ENCODE measurements at regions of chr11 and their contacts with region 1.

Region 1: GRCh38 chr11:126303623-126304456 is at the start of gene DCPS:
- DNase-seq: peak; percentile 84 to 99 (median 92)

Region 2: DNA sequence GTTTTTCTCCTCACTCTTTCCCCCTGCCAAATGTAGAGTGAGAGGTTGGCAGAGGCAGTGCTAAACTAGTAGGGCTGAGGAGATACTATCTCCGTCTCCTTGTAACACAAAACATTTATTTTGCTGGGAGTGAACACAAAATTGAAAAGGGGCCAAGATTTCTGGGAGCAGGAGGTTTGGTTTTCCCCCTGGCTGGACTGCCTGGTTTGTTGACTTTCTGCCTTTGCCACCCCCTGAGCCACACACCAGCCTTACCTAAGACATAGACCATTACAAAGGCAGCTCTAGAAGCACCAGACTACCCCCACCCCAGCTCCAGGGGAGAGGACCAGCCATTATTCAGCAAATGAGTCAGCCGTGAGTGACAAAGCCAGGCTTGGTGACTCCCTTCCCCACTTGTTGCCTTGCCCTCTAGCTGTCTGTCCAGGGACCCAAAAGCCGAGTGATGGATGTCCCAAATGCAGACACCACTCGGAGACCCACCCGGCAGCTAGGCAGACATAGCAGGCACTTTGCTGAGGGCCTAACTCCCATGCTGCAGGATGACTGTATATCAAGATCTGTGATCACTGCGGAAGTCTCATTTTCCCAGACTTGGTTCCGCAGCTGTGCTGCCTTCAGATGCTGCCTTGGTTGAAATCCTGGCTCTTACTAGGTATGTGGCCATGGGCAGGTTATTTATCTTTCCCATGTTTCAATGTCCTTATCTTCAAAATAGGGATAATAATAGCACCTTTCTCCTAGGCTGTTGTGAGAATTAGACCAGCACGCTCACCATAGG is 223.5 kb before region 1 on chr11:
- intact Hi-C with region 1: no loop called
- DNase-seq: no peak

Region 3: GRCh38 chr11:126345759-126346585 is 42.1 kb after region 1 on chr11:
- intact Hi-C with region 1: no loop called
- DNase-seq: peak in 3 of 10 donors; percentile 38 to 88 (median 77)

Region 4: DNA sequence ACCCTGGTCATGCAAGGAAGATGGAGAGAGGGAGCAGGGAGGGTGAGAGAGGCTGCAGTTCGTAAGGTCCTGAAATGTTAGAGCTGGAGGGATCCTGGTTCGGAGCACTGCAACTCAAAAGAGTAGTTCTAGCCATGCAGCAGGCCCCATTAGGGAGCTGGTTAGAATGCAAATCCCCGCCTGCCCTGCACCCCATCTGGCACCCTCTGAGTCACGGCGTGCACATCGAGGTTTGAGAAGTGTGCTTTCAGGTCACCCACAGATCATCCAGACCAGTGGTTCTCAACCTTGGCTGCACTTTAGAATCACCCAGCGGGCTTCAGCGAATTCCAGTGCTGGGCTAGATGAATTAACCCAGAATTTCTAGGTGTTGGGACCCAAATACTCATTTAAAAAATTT is 99.8 kb after region 1 on chr11:
- intact Hi-C with region 1: no loop called
- DNase-seq: peak in 2 of 10 donors; percentile 7 to 74

Region 5: DNA sequence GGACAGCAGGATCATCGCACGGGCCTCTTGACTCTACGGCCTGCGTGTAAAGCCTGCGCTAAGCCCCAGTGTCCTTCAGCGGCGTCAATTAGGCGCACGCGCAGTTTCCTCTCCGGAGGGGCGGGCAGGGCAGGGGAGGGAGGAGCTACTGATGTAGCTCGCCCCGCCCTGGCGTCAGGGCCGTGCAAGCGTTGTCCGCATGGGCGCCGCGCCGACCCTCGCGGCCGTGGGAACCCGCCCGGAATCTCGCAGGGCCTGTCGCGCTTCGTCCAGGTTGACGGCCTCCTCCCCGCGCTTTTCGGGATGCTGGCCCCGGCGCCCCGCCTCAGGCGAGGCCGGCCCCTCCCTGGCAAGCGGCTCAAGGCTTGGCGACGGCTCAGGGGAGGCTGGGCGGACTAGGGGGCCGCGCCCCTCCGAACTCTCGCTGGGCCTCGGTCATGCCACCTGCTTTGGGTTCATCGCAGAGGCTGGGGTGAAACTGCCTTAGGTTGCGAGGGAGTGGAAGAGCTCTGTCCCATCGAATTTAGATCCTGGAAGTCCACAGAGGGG is 112.8 kb after region 1 on chr11:
- intact Hi-C with region 1: loop called (anchors 5 kb)
- DNase-seq: peak; percentile 81 to 97 (median 91)

Measured in posterior cingulate gyrus (tissue), 11 donors.